ENCODE measurements at regions of chr20 and their contacts with region 1.

Region 1: DNA sequence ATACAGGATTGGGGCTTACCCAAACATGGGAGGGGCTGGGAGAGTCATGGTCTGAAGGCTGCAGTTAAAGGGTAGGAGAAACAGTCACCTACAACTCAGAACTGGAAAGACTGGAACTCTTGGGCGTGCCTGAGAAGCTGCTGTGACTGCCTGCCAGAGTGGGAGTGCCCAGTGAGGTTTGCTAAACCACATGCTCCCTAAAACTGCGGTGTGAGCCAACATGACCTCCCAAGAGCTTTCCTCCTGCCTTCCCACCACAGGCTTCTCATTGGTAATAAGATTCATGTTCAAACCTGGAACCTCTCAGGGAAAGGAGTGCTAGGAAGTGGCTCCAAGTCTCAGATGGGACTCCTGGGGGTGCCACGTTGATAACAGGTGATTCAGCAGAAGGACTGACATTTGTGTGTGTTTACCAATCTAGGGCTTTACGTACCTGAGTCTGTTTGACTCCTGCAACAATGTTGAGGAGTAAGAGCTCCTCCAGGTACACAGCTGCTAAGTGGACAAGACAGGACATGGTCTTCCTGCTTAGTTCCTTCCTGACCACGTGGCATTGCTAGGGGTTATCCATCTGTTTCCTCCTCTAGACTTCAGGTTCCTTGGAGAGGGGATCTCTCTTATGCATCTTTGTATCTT is 164.7 kb upstream of the SLC24A3 start:
- DNase-seq: no peak
- ATAC-seq: no peak
- H3K4me3 ChIP-seq: no peak overlapping the region
- H3K27ac ChIP-seq: no peak overlapping the region
- H3K4me1 ChIP-seq: no peaks in the 10 kb centered on the region
- H3K27me3 ChIP-seq: no peaks in the 10 kb centered on the region
- CTCF ChIP-seq: no peak
- EP300 ChIP-seq: no peak
- POLR2A ChIP-seq: no peak
- RAD21 ChIP-seq: no peak

Region 2: DNA sequence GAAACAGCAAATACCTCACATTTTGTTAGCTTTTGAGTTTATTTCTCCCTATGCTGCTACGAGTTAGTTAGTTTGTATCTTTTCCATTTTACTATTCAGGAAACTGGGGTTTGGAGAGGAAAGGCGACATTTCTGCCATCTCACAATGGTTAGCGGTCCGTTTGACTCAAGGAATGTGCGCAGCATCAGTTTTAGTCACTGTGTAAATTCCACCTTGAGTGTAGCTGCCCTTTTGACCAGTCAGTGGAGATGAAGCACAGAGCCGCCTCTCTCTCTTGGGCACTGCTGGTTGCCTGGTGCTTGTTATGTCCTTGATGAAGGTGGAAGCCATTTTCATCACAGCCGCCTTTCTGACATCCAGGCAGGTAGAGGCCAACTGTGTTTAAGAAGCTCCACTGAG is 48.7 kb before region 1 on chr20:
- CTCF ChIA-PET with region 1: no interaction called
- POLR2A ChIA-PET with region 1: no interaction called
- RAD21 ChIA-PET with region 1: no interaction called
- SMC1A ChIA-PET with region 1: no interaction called
- in situ Hi-C with region 1: loop called (anchors 5 kb)
- intact Hi-C with region 1: no loop called
- DNase-seq: no peak
- ATAC-seq: no peak
- H3K4me3 ChIP-seq: no peak overlapping the region
- H3K27ac ChIP-seq: no peak overlapping the region
- H3K4me1 ChIP-seq: no peaks in the 10 kb centered on the region
- H3K27me3 ChIP-seq: no peaks in the 10 kb centered on the region; a peak in 1 of 4 replicates
- CTCF ChIP-seq: no peak
- EP300 ChIP-seq: no peak
- POLR2A ChIP-seq: no peak
- RAD21 ChIP-seq: no peak

Measured in GM12878 (cell line).